Caco-2 (cell line): ENCODE measurements at regions of chrX and their contacts with region 1.

Region 1: DNA sequence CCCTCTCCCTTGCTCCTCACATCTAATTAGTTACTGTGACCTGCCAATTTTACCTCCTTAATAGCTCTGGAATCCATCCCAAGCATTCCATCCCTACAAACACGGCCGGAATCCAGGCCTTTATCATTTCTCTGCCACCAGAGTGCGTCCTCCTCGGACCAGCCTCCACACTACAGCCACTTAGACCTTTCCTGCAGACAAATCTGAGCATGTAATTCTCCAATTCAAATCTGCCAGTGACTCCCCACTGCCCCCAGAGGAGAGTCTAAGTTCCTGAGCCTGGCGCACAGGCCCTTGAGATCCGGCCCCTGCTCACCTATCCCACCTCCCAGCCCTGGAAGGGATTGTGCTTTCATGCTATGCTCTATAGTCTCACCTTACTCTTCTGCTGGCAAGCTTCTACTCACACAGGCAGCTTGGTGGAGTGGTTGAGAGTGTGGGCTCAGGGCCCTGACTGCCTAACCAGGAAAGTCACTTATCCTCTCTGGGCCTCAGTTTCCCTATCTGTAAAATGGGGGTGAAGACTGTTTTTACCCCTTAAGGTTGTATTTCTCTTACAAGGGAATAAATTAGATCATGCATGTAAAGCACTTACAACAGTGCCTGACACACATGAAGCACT is 31.2 kb downstream of the PJA1 start:
- DNase-seq: peak; percentile 67
- H3K4me3 ChIP-seq: no peak overlapping the region
- H3K4me3 Mint-ChIP-seq: no peak overlapping the region
- H3K27ac Mint-ChIP-seq: peak overlapping the region; percentile 78
- H3K4me1 ChIP-seq: no peaks in the 10 kb centered on the region
- H3K4me1 Mint-ChIP-seq: peaks cover 9% of the 10 kb centered on the region
- H3K27me3 ChIP-seq: no peaks in the 10 kb centered on the region
- H3K27me3 Mint-ChIP-seq: no peaks in the 10 kb centered on the region
- CTCF ChIP-seq: peak; percentile 42 to 59

Region 2: DNA sequence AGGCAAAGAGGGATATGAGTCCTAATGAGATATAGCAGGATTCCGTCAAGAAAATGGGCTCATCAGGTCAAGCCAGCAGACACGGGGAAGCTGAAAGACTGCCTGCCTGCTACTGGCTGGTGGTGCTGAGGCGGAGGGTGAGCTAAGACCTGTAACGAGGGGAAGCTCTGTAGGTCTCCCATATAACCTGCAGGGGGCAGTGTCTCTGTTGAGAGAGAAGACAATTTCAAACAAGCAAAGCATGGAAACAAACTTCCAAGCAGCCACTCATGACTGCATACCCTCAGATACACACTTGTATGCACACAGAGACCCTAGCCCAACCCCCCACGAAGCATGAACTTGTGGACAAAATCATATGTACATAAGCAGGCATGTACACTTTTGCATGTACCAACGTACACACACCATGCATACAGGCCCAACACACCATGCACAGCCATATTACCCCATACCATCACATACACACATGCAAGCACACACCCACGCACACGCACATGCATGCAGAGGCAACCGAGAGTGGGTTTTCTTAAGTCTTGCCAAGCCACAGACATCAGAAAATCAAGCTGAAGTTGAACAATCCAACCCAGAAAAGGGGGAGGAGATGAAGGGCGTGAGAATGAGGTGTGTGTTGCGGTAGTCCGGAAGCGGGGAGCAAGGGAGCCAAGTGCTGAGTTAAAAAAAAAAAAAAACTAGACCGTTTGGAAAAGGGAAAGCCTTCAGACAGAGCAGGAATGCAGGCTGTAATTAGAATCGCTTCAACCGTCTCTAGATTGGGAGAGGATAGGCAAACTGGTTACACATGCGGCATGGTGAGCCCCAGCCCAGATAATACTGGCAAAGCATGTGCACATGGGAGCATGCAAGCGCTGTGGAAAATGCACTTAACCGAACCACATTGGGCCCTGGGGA is 39.8 kb before region 1 on chrX:
- CTCF ChIA-PET with region 1: no interaction called
- POLR2A ChIA-PET with region 1: no interaction called
- intact Hi-C with region 1: loop called (anchors 1 kb)
- DNase-seq: peak; percentile 54 to 56
- H3K4me3 ChIP-seq: no peak overlapping the region
- H3K4me3 Mint-ChIP-seq: no peak overlapping the region
- H3K27ac Mint-ChIP-seq: no peak overlapping the region
- H3K4me1 ChIP-seq: no peaks in the 10 kb centered on the region
- H3K4me1 Mint-ChIP-seq: no peaks in the 10 kb centered on the region
- H3K27me3 ChIP-seq: no peaks in the 10 kb centered on the region
- H3K27me3 Mint-ChIP-seq: no peaks in the 10 kb centered on the region
- CTCF ChIP-seq: peak; percentile 28 to 30